ENCODE measurements at regions of chr9 and their contacts with region 1.

Region 1: GRCh38 chr9:3498691-3499090 is 27.1 kb downstream of the RFX3 start:
- DNase-seq: no peak
- H3K4me3 ChIP-seq: no peak overlapping the region
- H3K27ac ChIP-seq: no peak overlapping the region
- H3K4me1 ChIP-seq: no peaks in the 10 kb centered on the region
- CTCF ChIP-seq: no peak

Region 2: DNA sequence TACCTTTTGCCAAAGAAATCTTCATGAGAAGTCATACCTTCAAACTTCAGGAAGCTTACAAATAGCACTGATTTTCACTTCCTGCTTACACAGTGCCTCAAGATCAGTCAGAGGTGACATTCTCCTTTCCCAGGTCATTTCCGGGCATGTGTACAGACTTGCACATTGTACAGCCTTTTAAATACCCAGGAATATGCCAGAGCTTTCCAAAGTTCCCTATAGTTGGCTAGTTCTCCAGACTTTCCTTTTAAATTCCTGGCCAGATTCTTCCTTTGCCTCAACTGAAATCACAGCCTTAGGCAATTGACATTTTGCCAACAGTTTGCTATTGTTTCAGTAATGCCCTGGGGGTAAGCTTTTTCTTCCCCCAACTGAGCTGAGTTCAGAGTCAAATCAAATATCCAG is 20.1 kb before region 1 on chr9:
- CTCF ChIA-PET with region 1: interaction called, 3 read pairs
- POLR2A ChIA-PET with region 1: interaction called, 15 read pairs
- intact Hi-C with region 1: no loop called
- DNase-seq: peak; percentile 80
- H3K4me3 ChIP-seq: peak overlapping the region; percentile 42
- H3K27ac ChIP-seq: peak overlapping the region; percentile 78
- H3K4me1 ChIP-seq: peaks cover 62% of the 10 kb centered on the region
- CTCF ChIP-seq: no peak

Region 3: GRCh38 chr9:3508521-3509291 is 10.0 kb after region 1 on chr9:
- CTCF ChIA-PET with region 1: interaction called, 6 read pairs
- POLR2A ChIA-PET with region 1: interaction called, 19 read pairs
- intact Hi-C with region 1: no loop called
- DNase-seq: peak; percentile 51
- H3K4me3 ChIP-seq: peak overlapping the region; percentile 63
- H3K27ac ChIP-seq: peak overlapping the region; percentile 82
- H3K4me1 ChIP-seq: peaks cover 51% of the 10 kb centered on the region
- CTCF ChIP-seq: no peak

Measured in OCI-LY7 (cell line).